Activated CD4-positive, alpha-beta memory T cell treated with anti-CD3 and anti-CD28 coated beads for 36 hours (primary cell): ENCODE measurements at regions of chr11 and their contacts with region 1.

Region 1: DNA sequence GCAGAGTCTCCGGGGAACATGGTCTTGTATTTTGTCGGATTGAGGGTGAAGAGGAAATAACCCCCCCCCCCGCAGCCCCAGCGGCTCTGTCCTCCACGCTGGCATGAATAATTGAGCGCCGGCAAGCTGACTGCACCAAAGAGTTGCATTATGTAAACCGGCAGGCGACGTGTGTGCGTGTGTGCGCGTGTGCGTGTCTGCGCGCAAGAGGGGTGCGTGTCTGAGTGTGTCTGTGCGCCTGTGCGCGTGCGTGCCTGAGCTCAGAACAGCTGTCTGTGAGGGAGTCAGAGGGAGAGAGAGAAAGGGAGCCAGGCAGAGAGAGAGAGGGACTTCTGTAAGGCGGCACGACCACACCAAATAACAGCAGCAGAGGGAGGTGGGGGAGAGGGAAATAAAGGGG is 94.4 kb downstream of the SCN3B start:
- DNase-seq: peak; percentile 25
- H3K4me3 Mint-ChIP-seq: no peak overlapping the region
- H3K27ac Mint-ChIP-seq: no peak overlapping the region
- H3K4me1 Mint-ChIP-seq: peaks cover 9% of the 10 kb centered on the region
- H3K27me3 Mint-ChIP-seq: no peaks in the 10 kb centered on the region

Region 2: GRCh38 chr11:123438191-123438627 is 121.8 kb before region 1 on chr11:
- CTCF ChIA-PET with region 1: no interaction called
- POLR2A ChIA-PET with region 1: no interaction called
- intact Hi-C with region 1: no loop called
- DNase-seq: no peak
- H3K4me3 Mint-ChIP-seq: no peak overlapping the region
- H3K27ac Mint-ChIP-seq: peak overlapping the region; percentile 16
- H3K4me1 Mint-ChIP-seq: peaks cover 75% of the 10 kb centered on the region
- H3K27me3 Mint-ChIP-seq: no peaks in the 10 kb centered on the region

Region 3: GRCh38 chr11:123511037-123511870 is 48.8 kb before region 1 on chr11:
- CTCF ChIA-PET with region 1: interaction called, 11 read pairs
- POLR2A ChIA-PET with region 1: no interaction called
- intact Hi-C with region 1: loop called (anchors 1 kb)
- DNase-seq: peak; percentile 84
- H3K4me3 Mint-ChIP-seq: no peak overlapping the region
- H3K27ac Mint-ChIP-seq: no peak overlapping the region
- H3K4me1 Mint-ChIP-seq: peaks cover 17% of the 10 kb centered on the region
- H3K27me3 Mint-ChIP-seq: no peaks in the 10 kb centered on the region

Region 4: GRCh38 chr11:123570939-123571580 is 11.1 kb after region 1 on chr11:
- CTCF ChIA-PET with region 1: interaction called, 10 read pairs
- POLR2A ChIA-PET with region 1: no interaction called
- intact Hi-C with region 1: no loop called
- DNase-seq: no peak
- H3K4me3 Mint-ChIP-seq: no peak overlapping the region
- H3K27ac Mint-ChIP-seq: no peak overlapping the region
- H3K4me1 Mint-ChIP-seq: no peaks in the 10 kb centered on the region
- H3K27me3 Mint-ChIP-seq: no peaks in the 10 kb centered on the region

Region 5: GRCh38 chr11:123580557-123581275 is 20.7 kb after region 1 on chr11:
- CTCF ChIA-PET with region 1: interaction called, 11 read pairs
- POLR2A ChIA-PET with region 1: no interaction called
- intact Hi-C with region 1: no loop called
- DNase-seq: peak; percentile 79
- H3K4me3 Mint-ChIP-seq: no peak overlapping the region
- H3K27ac Mint-ChIP-seq: no peak overlapping the region
- H3K4me1 Mint-ChIP-seq: peaks cover 12% of the 10 kb centered on the region
- H3K27me3 Mint-ChIP-seq: no peaks in the 10 kb centered on the region

Region 6: DNA sequence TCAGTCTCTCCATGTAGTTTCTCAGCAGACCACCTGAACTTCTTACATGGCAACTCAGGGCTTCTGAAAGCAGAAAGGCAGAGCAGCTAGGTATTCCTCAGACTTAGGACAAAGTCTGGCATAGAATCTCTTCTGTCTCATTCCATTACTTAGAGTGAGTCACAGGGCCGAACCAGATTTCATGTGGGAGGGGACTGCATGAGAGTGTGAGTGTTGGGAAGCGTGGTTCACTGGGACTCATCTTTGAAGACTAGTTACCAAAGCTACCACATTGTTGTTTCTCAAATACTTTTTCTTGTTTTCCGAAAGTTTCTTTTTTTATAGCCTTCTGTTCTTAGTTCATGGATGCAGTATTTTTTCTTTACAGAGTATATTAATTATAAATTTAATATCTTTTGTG is 130.5 kb after region 1 on chr11:
- CTCF ChIA-PET with region 1: no interaction called
- POLR2A ChIA-PET with region 1: no interaction called
- intact Hi-C with region 1: no loop called
- DNase-seq: peak; percentile 29
- H3K4me3 Mint-ChIP-seq: no peak overlapping the region
- H3K27ac Mint-ChIP-seq: no peak overlapping the region
- H3K4me1 Mint-ChIP-seq: no peaks in the 10 kb centered on the region
- H3K27me3 Mint-ChIP-seq: peaks cover 17% of the 10 kb centered on the region